Naive thymus-derived CD4-positive, alpha-beta T cell (primary cell): ENCODE measurements at regions of chr21 and their contacts with region 1.

Region 1: DNA sequence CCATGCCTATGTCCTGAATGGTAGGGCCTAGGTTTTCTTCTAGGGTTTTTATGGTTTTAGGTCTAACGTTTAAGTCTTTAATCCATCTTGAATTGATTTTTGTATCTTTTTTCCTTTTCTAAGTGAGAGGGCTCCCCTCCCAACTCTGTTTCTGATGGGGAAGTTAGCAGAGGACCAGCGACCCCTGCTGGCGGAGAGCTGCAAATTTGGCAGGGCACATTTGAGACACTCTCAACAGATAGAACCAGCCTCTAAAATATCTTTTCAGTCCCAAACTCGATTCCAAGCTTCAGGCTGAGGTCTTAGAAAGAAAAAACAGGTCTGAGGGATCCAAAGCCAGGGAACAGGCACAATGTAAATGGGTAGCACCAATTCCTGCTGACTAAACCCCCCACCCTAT is 32.5 kb downstream of the LRRC3 start:
- DNase-seq: peak in 5 of 9 donors; percentile 19 to 52 (median 37)
- ATAC-seq: no peak
- H3K4me3 ChIP-seq: no peak overlapping the region
- H3K4me3 Mint-ChIP-seq: no peak overlapping the region
- H3K27ac ChIP-seq: no peak overlapping the region
- H3K27ac Mint-ChIP-seq: no peak overlapping the region
- H3K4me1 ChIP-seq: peaks cover 0 to 8% of the 10 kb centered on the region in 2 donors
- H3K4me1 Mint-ChIP-seq: peaks cover 8 to 19% (median 15%) of the 10 kb centered on the region in 7 donors
- H3K27me3 ChIP-seq: peaks cover 0 to 4% of the 10 kb centered on the region in 2 donors
- H3K27me3 Mint-ChIP-seq: peaks cover 0 to 15% (median 4%) of the 10 kb centered on the region in 5 donors

Region 2: DNA sequence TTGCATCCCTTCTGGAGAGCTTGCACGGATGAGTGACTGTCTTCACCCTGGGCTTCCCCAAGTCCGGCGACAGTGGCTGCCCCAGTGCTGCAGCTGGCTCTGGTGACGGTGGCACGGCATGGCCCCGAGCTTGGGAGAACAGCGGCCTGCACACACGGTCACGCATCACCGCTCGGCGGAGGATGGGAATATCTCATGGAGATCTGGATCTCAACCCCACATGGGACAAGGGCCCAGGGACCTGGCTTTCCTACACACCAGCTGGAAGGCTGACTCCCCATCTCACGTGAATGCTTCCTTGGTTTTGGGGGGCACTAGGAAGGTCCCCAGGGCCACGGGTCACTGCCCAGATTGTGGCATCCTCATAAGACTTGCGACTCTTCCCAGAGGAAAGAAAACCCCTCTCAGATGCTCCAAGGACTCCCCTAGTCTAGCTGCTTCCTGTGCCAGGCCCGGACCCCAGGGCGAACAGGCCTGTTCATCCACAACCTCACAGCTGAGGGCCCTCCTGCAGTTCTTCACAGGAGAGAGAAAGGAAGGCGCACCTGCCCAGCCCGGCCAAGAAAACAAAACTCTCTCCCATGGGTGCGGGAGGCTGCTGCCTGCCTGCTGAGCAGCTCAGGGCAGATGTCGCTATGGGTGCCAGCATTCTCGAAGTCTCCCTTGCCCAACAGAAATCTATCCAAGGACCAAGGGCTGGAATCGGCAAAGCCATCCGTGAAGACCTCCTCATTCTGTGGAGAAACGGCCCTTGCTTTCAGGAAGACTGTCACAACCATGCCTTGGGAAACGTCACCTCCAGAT is 158.5 kb before region 1 on chr21:
- CTCF ChIA-PET with region 1: no interaction called
- POLR2A ChIA-PET with region 1: no interaction called
- intact Hi-C with region 1: loop called in 1 of 2 experiments (anchors 10 kb)
- DNase-seq: no peak
- ATAC-seq: no peak
- H3K4me3 ChIP-seq: no peak overlapping the region
- H3K4me3 Mint-ChIP-seq: no peak overlapping the region
- H3K27ac ChIP-seq: no peak overlapping the region
- H3K27ac Mint-ChIP-seq: peak overlapping the region in 3 of 9 donors; percentile 29 to 54 (median 50)
- H3K4me1 ChIP-seq: no peaks in the 10 kb centered on the region
- H3K4me1 Mint-ChIP-seq: no peaks in the 10 kb centered on the region
- H3K27me3 ChIP-seq: no peaks in the 10 kb centered on the region
- H3K27me3 Mint-ChIP-seq: no peaks in the 10 kb centered on the region

Region 3: GRCh38 chr21:45409466-45410150 is 921.8 kb after region 1 on chr21:
- CTCF ChIA-PET with region 1: no interaction called
- POLR2A ChIA-PET with region 1: no interaction called
- intact Hi-C with region 1: no loop called
- DNase-seq: no peak
- ATAC-seq: no peak
- H3K4me3 ChIP-seq: no peak overlapping the region
- H3K4me3 Mint-ChIP-seq: no peak overlapping the region
- H3K27ac ChIP-seq: no peak overlapping the region
- H3K27ac Mint-ChIP-seq: no peak overlapping the region
- H3K4me1 ChIP-seq: peaks cover 0 to 5% of the 10 kb centered on the region in 2 donors
- H3K4me1 Mint-ChIP-seq: peaks cover 0 to 7% (median 4%) of the 10 kb centered on the region in 7 donors
- H3K27me3 ChIP-seq: peaks cover 0 to 5% of the 10 kb centered on the region in 2 donors
- H3K27me3 Mint-ChIP-seq: peaks cover 9 to 28% (median 23%) of the 10 kb centered on the region in 5 donors